Activated T-helper 2 cell treated with anti-CD3 and anti-CD28 coated beads, Interferon-gamma antibody, Interleukin-2, Interleukin-4, amounts not matched to agents 10 μg/mL and 5 μg/mL and 100 μg/mL, durations not matched to agents 14 hours and 24 hours and 36 hours (primary cell): ENCODE measurements at regions of chr7 and their contacts with region 1.

Region 1: DNA sequence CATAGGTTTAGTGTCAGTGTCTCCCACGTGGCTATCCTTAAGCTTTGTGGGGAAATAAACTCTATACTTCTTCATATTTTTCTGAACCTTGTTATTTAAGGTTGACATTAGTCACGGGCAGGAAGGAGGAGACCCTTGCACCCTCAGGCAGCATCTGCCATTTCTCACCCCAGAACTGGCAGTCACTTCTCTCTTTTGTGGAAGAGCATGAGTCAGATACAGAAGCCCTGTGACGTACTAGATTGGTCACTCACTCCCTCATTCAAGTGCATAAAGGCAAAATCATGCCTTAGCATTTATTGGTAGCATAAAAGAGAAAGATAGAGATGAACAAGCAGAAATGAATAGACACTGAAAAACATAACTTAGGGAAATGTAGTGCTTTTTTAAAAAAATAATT is 206.0 kb upstream of the MDFIC start:
- DNase-seq: no peak
- H3K4me3 Mint-ChIP-seq: no peak overlapping the region
- H3K27ac Mint-ChIP-seq: peak overlapping the region; percentile 0
- H3K4me1 Mint-ChIP-seq: peaks cover 16% of the 10 kb centered on the region
- H3K27me3 Mint-ChIP-seq: no peaks in the 10 kb centered on the region

Region 2: GRCh38 chr7:114519240-114519639 is 196.7 kb before region 1 on chr7:
- intact Hi-C with region 1: no loop called
- DNase-seq: no peak
- H3K4me3 Mint-ChIP-seq: no peak overlapping the region
- H3K27ac Mint-ChIP-seq: no peak overlapping the region
- H3K4me1 Mint-ChIP-seq: no peaks in the 10 kb centered on the region
- H3K27me3 Mint-ChIP-seq: no peaks in the 10 kb centered on the region

Region 3: DNA sequence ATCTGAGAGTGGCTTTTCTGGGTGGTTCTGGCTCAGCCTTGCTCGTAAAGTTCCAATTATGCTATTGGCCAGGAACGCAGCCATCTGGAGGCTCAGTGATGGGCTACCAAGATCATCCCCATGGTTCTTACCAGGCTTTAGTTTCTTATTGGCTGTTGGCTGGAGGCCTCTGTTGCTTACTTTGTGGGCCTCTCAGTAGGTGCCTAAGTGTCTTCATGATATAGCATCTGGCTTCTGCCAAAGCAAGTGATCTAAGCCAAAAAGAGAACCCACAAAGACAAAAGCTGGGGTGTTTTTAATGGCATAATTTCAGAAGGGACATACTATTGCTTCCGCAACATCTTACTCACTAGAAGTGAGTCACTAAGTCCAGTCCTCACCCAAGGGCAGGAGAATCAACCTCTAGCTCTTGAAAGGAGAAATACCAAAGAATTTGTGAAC is 74.0 kb after region 1 on chr7:
- intact Hi-C with region 1: loop called (anchors 2 kb)
- DNase-seq: no peak
- H3K4me3 Mint-ChIP-seq: no peak overlapping the region
- H3K27ac Mint-ChIP-seq: peak overlapping the region; percentile 85
- H3K4me1 Mint-ChIP-seq: peaks cover 62% of the 10 kb centered on the region
- H3K27me3 Mint-ChIP-seq: no peaks in the 10 kb centered on the region

Region 4: GRCh38 chr7:114799628-114800028 is 83.7 kb after region 1 on chr7:
- intact Hi-C with region 1: loop called (anchors 2 kb)
- DNase-seq: no peak
- H3K4me3 Mint-ChIP-seq: no peak overlapping the region
- H3K27ac Mint-ChIP-seq: peak overlapping the region; percentile 95
- H3K4me1 Mint-ChIP-seq: peaks cover 58% of the 10 kb centered on the region
- H3K27me3 Mint-ChIP-seq: no peaks in the 10 kb centered on the region

Region 5: DNA sequence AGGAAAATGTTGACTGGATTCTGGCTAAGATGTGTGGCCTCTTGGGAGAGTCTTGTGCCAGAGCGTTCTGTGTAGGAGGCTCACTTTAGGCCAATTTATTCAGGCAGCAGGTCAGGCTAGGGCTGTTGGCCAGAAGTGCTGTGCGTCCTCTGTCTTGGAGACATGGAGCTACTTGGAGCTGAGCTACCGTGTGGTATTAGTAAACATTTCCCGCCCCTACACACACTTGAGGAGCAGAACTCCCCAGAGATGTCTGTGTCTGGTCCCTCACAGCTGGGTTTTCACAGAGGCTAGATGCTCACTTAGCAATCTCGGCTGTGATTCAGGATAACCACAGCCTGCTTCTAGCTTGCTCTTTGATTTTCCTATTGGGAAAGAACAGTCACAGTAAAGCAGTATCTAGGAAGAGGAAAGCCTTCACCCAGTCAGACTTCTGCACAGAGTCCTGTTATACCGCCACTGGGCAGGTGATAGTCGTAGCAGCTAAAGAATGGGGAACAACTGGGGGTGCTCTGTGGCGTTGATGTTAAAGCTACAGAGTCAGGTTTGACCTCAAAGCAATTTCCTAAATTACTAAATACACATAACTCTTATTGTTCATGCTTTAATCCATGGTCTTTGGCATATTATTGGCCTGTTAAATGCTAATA is 292.7 kb after region 1 on chr7:
- intact Hi-C with region 1: loop called (anchors 5 kb)
- DNase-seq: no peak
- H3K4me3 Mint-ChIP-seq: peak overlapping the region; percentile 38
- H3K27ac Mint-ChIP-seq: peak overlapping the region; percentile 79
- H3K4me1 Mint-ChIP-seq: peaks cover 78% of the 10 kb centered on the region
- H3K27me3 Mint-ChIP-seq: no peaks in the 10 kb centered on the region